ENCODE measurements at regions of chrX and their contacts with region 1.

Region 1: DNA sequence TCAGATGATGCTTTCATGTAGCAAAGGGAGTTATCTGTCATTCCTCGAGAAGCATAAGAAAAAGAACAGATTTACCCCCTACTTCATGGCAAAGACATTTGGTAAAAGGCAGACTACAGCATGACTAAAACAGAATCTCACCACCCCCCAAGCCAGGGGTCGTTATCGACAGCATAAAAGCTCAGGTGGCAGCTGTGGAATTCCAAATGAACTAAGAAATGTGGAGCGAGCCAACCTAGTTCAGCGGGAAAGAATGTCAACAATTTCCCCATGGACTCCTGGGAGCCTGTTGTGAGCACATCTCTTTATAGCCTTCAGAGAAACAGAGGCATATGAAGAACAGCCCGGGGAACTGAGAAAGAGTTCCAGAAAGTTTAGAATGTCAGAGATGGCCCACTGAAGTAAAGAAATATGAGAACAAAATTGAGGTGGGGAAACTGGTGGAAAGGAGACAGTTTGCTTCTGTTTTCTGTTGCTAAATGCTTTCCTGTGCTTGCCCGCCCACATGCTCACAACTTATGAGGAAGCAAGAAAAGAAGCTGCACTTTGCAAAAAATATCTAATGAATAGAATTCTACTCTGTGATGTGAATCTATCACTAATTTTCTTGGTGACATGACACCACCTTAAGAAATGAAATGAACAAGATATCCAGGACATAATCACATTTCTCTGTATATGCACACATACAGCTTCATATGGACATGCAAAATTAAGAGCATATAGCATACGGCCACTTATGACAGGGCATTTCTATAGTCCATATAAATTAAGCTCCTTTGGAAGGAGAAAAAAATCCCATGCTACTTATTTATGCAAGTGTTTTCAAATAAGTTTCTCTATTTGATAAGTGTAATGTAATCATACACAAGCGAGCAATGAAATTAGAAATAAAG is 135.3 kb upstream of the MID1 start:
- DNase-seq: peak; percentile 31
- H3K4me3 ChIP-seq: no peak overlapping the region
- CTCF ChIP-seq: no peak

Region 2: GRCh38 chrX:10769195-10769594 is 13.5 kb after region 1 on chrX:
- CTCF ChIA-PET with region 1: interaction called, 20 read pairs
- POLR2A ChIA-PET with region 1: no interaction called
- DNase-seq: no peak
- H3K4me3 ChIP-seq: no peak overlapping the region
- CTCF ChIP-seq: peak; percentile 17